ENCODE measurements at regions of chrX and their contacts with region 1.

Region 1: DNA sequence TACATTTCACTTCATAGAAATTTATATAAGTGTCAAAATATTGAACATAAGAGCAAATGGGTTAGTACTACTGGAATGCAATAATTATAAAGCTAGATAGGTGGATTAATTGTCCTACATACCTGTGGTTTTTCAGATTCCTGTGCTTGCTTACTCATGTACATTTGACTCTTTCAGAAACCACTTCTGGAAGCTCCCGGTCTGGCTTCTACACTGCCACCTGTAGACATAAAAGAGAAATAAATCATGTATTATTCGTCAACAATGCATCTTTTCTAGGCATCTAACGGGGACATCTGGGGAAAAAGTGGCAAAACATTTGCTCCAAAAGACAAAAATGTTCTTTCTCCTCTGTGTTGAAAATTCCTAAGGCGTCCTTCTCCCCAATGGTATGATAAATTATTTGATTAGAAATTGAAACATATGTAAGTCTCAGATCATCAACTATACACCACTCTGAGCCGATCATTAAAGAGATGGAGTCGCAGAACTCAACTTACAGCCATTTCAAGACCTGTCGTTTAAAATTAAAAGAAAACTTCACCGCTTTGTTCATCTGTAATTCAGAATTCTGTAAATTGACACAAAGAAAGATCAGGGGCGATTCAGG is 648.7 kb upstream of the DIPK2B start:
- ATAC-seq: peak in 3 of 8 experiments; percentile 22 to 44 (median 43)
- H3K4me3 ChIP-seq: peak overlapping the region; percentile 46 to 86 (median 70)
- H3K27ac ChIP-seq: no peak overlapping the region
- H3K4me1 ChIP-seq: peaks cover 0 to 8% of the 10 kb centered on the region in 2 donors

Region 2: DNA sequence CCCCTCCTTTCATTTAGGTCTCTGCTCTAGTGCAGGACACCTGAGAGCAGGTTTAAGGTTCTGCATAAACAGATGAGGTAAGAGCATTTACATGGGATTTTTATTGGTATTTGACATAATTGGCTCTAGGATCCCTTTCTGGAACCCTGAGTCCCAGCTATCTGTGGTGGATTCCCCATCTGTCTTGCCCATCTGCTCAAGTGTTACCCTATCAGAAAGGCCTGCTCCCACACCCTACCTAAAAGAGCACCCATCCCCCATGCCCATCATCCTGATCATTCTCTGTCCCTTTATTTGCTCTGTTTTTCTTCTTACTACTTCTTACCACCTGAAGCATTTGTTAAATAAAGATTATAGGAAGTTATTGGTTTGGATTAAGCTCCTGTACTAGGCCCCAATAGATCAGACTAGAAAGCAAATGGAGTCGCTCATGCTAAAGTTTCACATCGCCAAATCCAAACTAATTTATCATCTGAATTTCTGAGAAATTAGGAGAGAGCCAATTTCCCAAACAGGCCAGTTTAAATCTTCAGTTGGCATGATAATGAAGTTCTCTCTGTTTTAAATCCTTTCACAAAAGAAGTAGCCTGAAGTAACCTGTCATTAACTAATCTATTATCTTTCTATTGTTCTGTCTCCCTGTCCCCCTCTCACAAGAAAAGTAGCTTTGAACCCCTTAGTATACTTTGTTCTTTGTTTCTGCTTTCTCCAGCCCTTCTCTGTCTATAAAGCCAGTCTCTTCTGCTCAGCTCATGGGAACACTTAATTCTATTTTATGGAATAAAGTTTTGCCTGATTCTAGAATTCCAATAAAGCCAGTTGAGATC is 517.2 kb after region 1 on chrX:
- in situ Hi-C with region 1: loop called in 1 of 9 experiments (anchors 25 kb)
- ATAC-seq: no peak
- H3K4me3 ChIP-seq: no peak overlapping the region
- H3K27ac ChIP-seq: no peak overlapping the region
- H3K4me1 ChIP-seq: no peaks in the 10 kb centered on the region

Region 3: GRCh38 chrX:46408553-46409407 is 559.4 kb after region 1 on chrX:
- in situ Hi-C with region 1: loop called in 1 of 9 experiments (anchors 25 kb)
- ATAC-seq: peak in 1 of 8 experiments; percentile 42
- H3K4me3 ChIP-seq: no peak overlapping the region
- H3K27ac ChIP-seq: no peak overlapping the region
- H3K4me1 ChIP-seq: no peaks in the 10 kb centered on the region